Activated B cell treated with CpG ODN at 0.5 μM for 24 hours (primary cell): ENCODE measurements at regions of chr5 and their contacts with region 1.

Region 1: DNA sequence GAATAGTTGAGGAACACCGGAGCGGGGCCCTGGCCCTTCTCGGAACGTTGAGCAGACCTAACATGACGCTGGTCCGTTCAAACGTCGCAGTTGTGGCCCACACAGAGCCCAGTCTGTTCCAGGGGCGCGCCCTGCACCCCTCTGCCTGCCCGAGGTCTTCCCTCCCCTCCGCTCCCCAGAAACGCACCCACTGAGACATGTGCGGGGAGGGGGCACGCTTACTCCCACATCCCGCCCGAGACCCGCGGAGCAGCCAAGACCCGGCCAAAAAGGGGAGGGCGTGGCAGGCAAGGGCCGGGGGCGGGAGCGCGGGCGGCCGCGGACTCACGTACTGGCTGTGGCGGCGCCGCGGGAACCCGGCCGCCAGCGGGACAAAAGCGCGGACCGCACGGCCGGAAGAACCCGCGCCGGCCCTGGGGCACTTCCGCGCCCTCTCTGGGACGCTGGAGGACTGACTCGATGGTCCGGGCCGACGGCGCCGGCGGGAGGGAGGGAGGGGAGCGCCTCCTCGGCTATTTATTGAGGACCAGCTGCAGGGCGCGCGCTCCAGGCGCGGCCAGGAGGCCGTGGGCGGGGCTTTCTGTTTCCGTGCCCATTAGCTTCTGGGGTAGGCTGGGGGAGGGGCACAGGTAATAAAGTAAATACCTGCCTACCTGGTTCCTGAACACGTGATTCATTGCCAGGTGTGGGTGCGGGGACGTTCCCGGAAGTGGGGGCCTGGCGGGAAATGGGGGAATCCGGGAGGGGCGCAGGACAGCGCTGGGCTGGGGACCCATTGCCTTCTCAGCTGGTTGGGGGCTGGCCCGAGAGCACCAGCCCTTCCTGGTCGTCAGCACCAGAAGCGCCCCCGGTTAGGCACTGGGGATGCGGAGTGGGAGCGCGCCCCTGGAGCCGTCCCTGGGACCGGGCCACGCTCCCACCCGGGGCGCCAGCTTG is at the start of gene ZFP62:
- DNase-seq: peak; percentile 92
- ATAC-seq: peak; percentile 82
- H3K4me3 Mint-ChIP-seq: peak within 1 kb of the TSS; percentile 94
- H3K27ac Mint-ChIP-seq: peak within 1 kb of the TSS; percentile 94
- H3K4me1 Mint-ChIP-seq: peaks cover 18% of the 10 kb centered on the region
- H3K27me3 Mint-ChIP-seq: no peaks in the 10 kb centered on the region
- CTCF ChIP-seq: no peak
- total RNA-seq, gene ZFP62: 43.7 and 45.6 TPM in 2 replicates

Region 2: GRCh38 chr5:180494060-180494509 is 367.1 kb before region 1 on chr5 and contains the start of gene CNOT6:
- CTCF ChIA-PET with region 1: no interaction called
- POLR2A ChIA-PET with region 1: no interaction called
- intact Hi-C with region 1: loop called (anchors 2 kb)
- DNase-seq: peak; percentile 95
- ATAC-seq: peak; percentile 92
- H3K4me3 Mint-ChIP-seq: peak within 1 kb of the TSS; percentile 88
- H3K27ac Mint-ChIP-seq: peak within 1 kb of the TSS; percentile 92
- H3K4me1 Mint-ChIP-seq: peaks cover 32% of the 10 kb centered on the region
- H3K27me3 Mint-ChIP-seq: no peaks in the 10 kb centered on the region
- CTCF ChIP-seq: no peak
- total RNA-seq, gene CNOT6: 24.9 and 25.7 TPM in 2 replicates

Region 3: DNA sequence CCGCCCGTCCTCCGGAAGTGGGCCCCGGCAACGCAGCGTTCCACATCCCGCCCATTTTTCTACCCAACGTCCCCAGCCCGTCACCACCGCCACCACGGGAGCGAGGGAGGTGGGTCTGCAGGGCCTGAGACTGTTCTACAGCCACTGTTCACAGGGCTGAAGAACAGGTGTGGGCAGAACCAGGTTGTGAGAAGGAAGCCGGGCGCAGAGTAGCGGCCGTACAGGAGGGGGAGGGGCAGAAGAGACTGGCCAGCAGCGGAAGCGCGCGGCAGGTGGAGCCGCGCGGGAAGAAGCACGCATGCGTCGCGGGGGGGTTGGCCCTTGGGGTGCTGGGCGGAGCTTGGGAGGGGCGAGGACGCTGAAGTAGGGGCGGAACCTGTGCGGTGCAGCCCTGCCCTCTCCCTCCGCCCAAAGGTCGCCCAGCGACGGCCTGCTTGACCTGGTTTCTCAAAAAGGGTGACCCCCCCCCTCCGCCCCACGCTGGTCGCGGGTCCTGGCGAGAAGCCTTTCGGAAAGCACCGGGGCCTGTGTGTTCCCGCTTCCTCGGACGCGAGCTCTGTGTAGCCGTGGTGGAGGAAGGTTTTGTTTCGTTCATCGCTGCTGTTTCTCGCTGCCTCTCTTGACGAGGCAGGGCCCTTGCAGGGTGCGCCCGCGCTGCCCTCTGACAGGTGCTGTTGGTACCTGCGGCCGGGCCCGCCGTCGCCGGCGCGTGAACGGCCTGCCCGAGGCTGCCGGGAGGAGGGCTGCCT is 50.8 kb before region 1 on chr5:
- CTCF ChIA-PET with region 1: interaction called, 3 read pairs
- POLR2A ChIA-PET with region 1: interaction called, 54 read pairs
- intact Hi-C with region 1: loop called (anchors 1 kb)
- DNase-seq: peak; percentile 98
- ATAC-seq: peak; percentile 84
- H3K4me3 Mint-ChIP-seq: peak overlapping the region; percentile 98
- H3K27ac Mint-ChIP-seq: peak overlapping the region; percentile 100
- H3K4me1 Mint-ChIP-seq: peaks cover 76% of the 10 kb centered on the region
- H3K27me3 Mint-ChIP-seq: no peaks in the 10 kb centered on the region
- CTCF ChIP-seq: no peak

Region 4: GRCh38 chr5:180975338-180975737 is 114.2 kb after region 1 on chr5:
- CTCF ChIA-PET with region 1: no interaction called
- POLR2A ChIA-PET with region 1: interaction called, 22 read pairs
- intact Hi-C with region 1: loop called (anchors 1 kb)
- DNase-seq: peak; percentile 41
- ATAC-seq: peak; percentile 99
- H3K4me3 Mint-ChIP-seq: peak overlapping the region; percentile 47
- H3K27ac Mint-ChIP-seq: peak overlapping the region; percentile 81
- H3K4me1 Mint-ChIP-seq: peaks cover 40% of the 10 kb centered on the region
- H3K27me3 Mint-ChIP-seq: no peaks in the 10 kb centered on the region
- CTCF ChIP-seq: no peak

Region 5: DNA sequence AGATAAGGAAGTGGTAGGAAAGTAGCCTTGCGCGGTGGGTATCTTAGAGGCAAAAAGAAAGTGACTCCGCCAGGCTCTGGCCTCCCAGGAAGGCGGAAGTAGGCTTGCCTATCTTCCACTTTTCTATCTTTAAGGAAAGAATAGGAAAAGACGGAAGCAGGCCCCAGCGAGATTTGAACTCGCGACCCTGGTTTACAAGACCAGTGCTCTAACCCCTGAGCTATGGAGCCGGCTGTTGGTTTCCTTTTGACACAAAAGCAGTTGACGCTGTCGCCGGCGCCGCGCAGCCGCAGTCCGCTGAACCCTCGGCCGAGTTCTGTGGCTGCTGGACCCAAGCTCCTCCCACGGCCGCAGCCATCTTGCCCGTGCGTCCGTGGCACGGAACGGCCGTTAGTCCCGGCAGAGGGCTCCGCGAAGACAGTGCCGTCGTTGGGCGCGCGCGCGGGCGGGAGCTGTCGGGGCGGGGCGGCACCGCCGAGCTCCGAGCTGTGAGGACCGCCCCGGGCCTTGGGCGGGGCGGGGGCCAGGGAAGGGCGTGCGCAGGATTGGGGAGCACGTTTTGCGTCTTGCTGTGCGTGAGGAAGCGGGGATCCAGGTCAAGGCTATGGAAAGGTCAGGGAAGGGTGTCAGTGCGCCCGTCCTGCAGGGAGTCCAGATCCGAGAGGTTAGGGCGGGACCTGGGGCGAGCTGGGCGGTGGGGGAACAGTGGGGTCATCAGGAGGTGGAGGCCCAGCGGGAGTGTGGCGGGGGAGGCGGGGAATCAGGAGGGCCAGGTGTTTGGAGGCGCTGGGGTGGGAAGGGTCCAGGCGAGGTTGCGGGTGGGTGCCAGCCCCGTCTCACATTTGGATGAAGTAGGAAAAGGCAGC is 330.6 kb after region 1 on chr5:
- CTCF ChIA-PET with region 1: no interaction called
- POLR2A ChIA-PET with region 1: interaction called, 10 read pairs
- intact Hi-C with region 1: loop called (anchors 1 kb)
- DNase-seq: peak; percentile 99
- ATAC-seq: peak; percentile 63
- H3K4me3 Mint-ChIP-seq: peak overlapping the region; percentile 88
- H3K27ac Mint-ChIP-seq: peak overlapping the region; percentile 96
- H3K4me1 Mint-ChIP-seq: peaks cover 34% of the 10 kb centered on the region
- H3K27me3 Mint-ChIP-seq: peaks cover 11% of the 10 kb centered on the region
- CTCF ChIP-seq: no peak

Region 6: GRCh38 chr5:181243512-181244343 is 382.6 kb after region 1 on chr5 and contains the start of gene RACK1:
- CTCF ChIA-PET with region 1: no interaction called
- POLR2A ChIA-PET with region 1: interaction called, 7 read pairs
- intact Hi-C with region 1: loop called (anchors 1 kb)
- DNase-seq: peak; percentile 79
- ATAC-seq: peak; percentile 79
- H3K4me3 Mint-ChIP-seq: peak within 1 kb of the TSS; percentile 96
- H3K27ac Mint-ChIP-seq: peak within 1 kb of the TSS; percentile 98
- H3K4me1 Mint-ChIP-seq: peaks cover 73% of the 10 kb centered on the region
- H3K27me3 Mint-ChIP-seq: no peaks in the 10 kb centered on the region
- CTCF ChIP-seq: no peak
- total RNA-seq, gene RACK1: 2,528 and 2,812 TPM in 2 replicates